ENCODE measurements at regions of chr19 and their contacts with region 1.

Region 1: GRCh38 chr19:35044317-35045117 is 3.0 kb downstream of the HPN start:
- DNase-seq: peak; percentile 71
- ATAC-seq: no peak
- H3K4me3 Mint-ChIP-seq: no peak overlapping the region
- H3K27ac Mint-ChIP-seq: no peak overlapping the region
- H3K4me1 Mint-ChIP-seq: peaks cover 27% of the 10 kb centered on the region
- H3K27me3 Mint-ChIP-seq: peaks cover 10% of the 10 kb centered on the region

Region 2: GRCh38 chr19:34918190-34918589 is 126.3 kb before region 1 on chr19:
- CTCF ChIA-PET with region 1: no interaction called
- POLR2A ChIA-PET with region 1: no interaction called
- DNase-seq: no peak
- ATAC-seq: no peak
- H3K4me3 Mint-ChIP-seq: no peak overlapping the region
- H3K27ac Mint-ChIP-seq: no peak overlapping the region
- H3K4me1 Mint-ChIP-seq: no peaks in the 10 kb centered on the region
- H3K27me3 Mint-ChIP-seq: no peaks in the 10 kb centered on the region

Region 3: DNA sequence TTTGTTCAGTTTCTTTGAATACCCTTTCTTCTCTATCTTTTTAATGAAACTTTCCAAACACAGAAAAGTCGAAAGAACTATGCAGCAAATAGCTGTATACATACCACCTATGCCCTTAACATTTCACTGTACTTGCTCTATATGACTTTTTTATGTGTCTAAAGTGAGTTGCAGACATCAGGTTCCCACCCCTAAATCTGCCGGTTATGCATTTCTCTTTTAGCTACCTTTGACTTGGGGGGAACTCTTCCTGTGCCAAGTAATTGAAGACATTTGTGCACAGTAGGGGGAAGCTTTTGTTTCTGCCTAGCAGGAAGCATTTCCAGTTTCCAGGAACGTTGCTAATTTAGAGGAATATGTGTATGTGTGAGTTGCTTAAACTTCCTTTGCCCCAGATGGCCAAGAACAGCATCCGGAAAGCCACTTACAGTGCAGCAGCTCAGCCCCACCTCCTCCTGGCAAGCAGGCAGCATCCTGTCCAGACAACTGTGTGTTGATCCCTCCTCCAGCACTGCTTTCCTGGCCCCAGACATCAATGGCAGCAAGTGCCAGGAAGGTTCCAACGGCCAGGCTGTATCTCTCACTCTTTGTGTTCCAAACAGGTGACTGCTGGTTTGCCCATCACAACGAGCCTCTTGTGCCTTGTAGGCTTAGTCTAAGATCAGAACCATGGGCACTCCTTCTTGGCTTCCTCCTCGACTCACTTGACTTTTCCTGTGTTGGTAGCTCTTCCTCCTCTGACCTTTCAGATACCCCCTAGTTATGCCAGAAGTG is 59.1 kb before region 1 on chr19:
- CTCF ChIA-PET with region 1: interaction called, 14 read pairs
- POLR2A ChIA-PET with region 1: no interaction called
- DNase-seq: peak; percentile 58
- ATAC-seq: peak; percentile 88
- H3K4me3 Mint-ChIP-seq: peak overlapping the region; percentile 46
- H3K27ac Mint-ChIP-seq: peak overlapping the region; percentile 75
- H3K4me1 Mint-ChIP-seq: peaks cover 10% of the 10 kb centered on the region
- H3K27me3 Mint-ChIP-seq: no peaks in the 10 kb centered on the region

Region 4: GRCh38 chr19:35055715-35056179 is 11.2 kb after region 1 on chr19:
- CTCF ChIA-PET with region 1: interaction called, 20 read pairs
- POLR2A ChIA-PET with region 1: no interaction called
- DNase-seq: peak; percentile 31
- ATAC-seq: peak; percentile 53
- H3K4me3 Mint-ChIP-seq: no peak overlapping the region
- H3K27ac Mint-ChIP-seq: no peak overlapping the region
- H3K4me1 Mint-ChIP-seq: no peaks in the 10 kb centered on the region
- H3K27me3 Mint-ChIP-seq: no peaks in the 10 kb centered on the region

Measured in activated CD8-positive, alpha-beta T cell treated with anti-CD3 and anti-CD28 coated beads, Interleukin-2, amount 10 ng/mL, durations not matched to agents 7 days and 5 days (primary cell).